ENCODE measurements at regions of chr1 and their contacts with region 1.

Region 1: DNA sequence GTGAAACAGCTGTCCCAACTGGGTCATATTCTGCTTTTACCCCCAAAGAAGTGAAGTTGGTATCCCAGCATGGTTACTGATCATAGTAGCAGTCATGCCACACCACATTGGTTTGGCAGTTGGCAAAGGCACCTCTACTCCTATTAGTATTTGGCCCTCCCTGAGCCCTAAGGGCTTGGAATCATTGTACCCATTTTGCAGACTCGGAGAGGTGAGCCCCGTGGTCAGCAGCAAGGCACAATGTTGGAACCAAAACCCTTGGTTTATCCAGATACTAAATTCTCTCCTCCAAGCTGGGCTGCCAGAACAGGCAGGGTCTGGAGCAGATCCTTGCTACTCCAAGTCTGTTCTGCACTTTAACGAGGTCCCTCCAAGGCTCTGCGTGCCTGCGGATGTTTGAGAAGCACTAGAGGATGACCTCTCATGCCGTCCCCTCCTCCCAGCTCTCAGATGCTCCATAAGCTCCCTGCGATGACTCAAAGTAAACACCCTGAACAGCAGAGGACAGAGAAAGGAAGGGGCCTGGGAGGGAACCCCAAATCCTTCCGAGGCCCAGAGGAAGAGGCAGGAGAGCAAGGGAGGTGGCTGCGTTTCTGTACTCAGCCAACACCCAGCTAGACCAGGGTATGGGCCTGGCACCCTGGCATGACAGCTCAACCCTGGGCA is 89.3 kb downstream of the PAX7 start:
- DNase-seq: no peak
- H3K4me3 ChIP-seq: no peak overlapping the region
- H3K27ac ChIP-seq: no peak overlapping the region
- H3K27me3 ChIP-seq: peaks cover 0 to 79% (median 35%) of the 10 kb centered on the region in 45 donors
- CTCF ChIP-seq: no peak

Region 2: GRCh38 chr1:18770799-18771198 is 50.9 kb after region 1 on chr1:
- intact Hi-C with region 1: loop called in 1 of 2 experiments (anchors 2 kb)
- DNase-seq: no peak
- H3K4me3 ChIP-seq: no peak overlapping the region
- H3K27ac ChIP-seq: no peak overlapping the region
- H3K27me3 ChIP-seq: peaks cover 0 to 64% (median 16%) of the 10 kb centered on the region in 45 donors
- CTCF ChIP-seq: no peak